ENCODE measurements at regions of chr12 and their contacts with region 1.

Region 1: GRCh38 chr12:109937371-109937770 is 37.3 kb downstream of the TCHP start:
- DNase-seq: no peak
- ATAC-seq: no peak
- H3K4me3 ChIP-seq: no peak overlapping the region
- H3K27ac ChIP-seq: no peak overlapping the region
- H3K4me1 ChIP-seq: no peaks in the 10 kb centered on the region
- H3K27me3 ChIP-seq: no peaks in the 10 kb centered on the region

Region 2: DNA sequence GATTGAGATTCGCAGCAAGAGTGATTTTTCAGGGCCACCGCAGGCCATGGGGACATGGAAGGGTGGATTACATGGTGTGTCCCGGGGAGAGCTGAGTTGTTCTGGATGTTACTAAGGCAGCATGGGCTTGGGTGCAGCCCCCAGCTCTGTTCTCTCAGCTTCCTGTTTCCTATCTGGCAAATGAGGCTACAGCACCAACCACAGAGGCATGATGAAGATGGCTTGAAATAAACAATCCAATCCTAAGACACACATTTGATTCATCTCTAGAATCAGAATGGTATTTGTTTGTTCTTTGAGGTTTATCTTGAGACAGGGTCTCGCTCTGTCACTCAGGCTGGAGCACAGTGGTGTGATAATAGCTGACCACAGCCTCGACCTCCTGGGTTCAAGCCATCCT is 78.6 kb before region 1 on chr12:
- intact Hi-C with region 1: no loop called
- DNase-seq: no peak
- ATAC-seq: no peak
- H3K4me3 ChIP-seq: no peak overlapping the region
- H3K27ac ChIP-seq: no peak overlapping the region
- H3K4me1 ChIP-seq: no peaks in the 10 kb centered on the region
- H3K27me3 ChIP-seq: no peaks in the 10 kb centered on the region

Region 3: DNA sequence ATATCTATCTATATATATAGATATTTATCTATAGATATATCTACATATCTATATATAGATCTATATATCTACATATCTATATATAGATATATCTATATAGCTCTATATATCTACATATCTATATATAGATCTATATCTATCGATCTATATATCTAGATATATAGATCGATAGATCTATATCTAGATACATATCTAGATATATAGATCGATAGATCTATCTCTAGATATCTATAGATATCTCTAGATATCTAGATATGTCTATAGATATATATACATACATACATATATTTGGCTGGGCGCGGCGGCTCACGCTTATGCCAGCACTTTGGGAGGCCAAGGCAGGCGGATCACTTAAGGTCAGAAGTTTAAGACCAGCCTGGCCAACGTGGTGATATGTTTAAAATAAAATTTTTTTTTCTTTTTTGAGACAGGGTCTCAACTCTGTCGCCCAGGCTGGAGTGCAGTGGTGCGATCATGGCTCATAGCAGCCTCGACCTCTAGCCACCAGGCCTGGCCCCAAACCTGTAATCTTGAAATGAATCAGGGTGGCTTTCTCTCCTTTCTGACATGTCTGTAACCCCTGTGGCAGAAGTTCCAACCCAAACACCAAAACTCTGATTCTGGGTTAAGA is 494.7 kb after region 1 on chr12:
- intact Hi-C with region 1: loop called in 1 of 2 experiments (anchors 5 kb)
- DNase-seq: no peak
- ATAC-seq: no peak
- H3K4me3 ChIP-seq: no peak overlapping the region
- H3K27ac ChIP-seq: no peak overlapping the region
- H3K4me1 ChIP-seq: no peaks in the 10 kb centered on the region
- H3K27me3 ChIP-seq: no peaks in the 10 kb centered on the region

Measured in aorta (tissue), 5 donors.